ENCODE measurements at regions of chr2 and their contacts with region 1.

Region 1: GRCh38 chr2:65064728-65065552 is 8.7 kb downstream of the CEP68 start:
- DNase-seq: peak; percentile 70
- H3K4me3 Mint-ChIP-seq: no peak overlapping the region
- H3K27ac Mint-ChIP-seq: peak overlapping the region; percentile 47
- H3K4me1 Mint-ChIP-seq: peaks cover 32% of the 10 kb centered on the region
- H3K27me3 Mint-ChIP-seq: no peaks in the 10 kb centered on the region

Region 2: DNA sequence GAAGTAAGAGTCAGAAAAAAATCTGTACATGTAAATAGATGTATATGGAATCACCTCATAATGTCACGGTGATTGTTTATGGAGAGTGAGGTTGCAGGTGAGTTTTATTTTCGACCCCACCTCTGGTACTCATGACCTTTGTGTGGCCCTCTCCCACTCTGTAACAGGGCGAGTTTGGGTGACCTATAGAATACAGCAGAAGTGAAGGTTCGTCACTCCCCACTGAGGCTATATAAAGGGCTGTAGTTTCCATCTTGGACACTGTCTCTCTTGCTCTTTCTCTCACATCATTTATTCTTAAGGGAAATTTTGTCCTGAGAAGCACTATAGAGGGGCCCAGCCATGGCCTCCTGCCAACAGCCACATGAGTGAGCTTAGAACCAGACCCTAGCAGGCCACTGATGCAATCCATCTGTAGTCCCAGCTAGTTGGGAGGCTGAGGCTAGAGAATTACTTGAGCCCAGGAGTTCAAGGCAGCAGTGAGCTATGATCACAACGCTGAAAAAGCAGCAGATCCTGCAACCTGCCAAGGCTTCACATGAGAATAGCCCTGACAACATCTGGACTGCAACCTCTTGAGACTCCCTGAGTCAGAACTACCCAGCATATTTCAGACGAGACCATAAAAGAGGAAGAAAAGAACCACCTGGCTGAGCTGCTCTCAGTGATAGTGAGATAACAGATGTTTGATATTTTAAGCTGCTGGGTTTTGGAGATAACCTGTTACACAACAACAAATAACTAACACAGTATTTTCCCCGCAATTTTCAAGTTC is 150.0 kb before region 1 on chr2:
- CTCF ChIA-PET with region 1: interaction called, 15 read pairs
- intact Hi-C with region 1: loop called (anchors 1 kb)
- DNase-seq: no peak
- H3K4me3 Mint-ChIP-seq: no peak overlapping the region
- H3K27ac Mint-ChIP-seq: no peak overlapping the region
- H3K4me1 Mint-ChIP-seq: peaks cover 14% of the 10 kb centered on the region
- H3K27me3 Mint-ChIP-seq: no peaks in the 10 kb centered on the region

Region 3: DNA sequence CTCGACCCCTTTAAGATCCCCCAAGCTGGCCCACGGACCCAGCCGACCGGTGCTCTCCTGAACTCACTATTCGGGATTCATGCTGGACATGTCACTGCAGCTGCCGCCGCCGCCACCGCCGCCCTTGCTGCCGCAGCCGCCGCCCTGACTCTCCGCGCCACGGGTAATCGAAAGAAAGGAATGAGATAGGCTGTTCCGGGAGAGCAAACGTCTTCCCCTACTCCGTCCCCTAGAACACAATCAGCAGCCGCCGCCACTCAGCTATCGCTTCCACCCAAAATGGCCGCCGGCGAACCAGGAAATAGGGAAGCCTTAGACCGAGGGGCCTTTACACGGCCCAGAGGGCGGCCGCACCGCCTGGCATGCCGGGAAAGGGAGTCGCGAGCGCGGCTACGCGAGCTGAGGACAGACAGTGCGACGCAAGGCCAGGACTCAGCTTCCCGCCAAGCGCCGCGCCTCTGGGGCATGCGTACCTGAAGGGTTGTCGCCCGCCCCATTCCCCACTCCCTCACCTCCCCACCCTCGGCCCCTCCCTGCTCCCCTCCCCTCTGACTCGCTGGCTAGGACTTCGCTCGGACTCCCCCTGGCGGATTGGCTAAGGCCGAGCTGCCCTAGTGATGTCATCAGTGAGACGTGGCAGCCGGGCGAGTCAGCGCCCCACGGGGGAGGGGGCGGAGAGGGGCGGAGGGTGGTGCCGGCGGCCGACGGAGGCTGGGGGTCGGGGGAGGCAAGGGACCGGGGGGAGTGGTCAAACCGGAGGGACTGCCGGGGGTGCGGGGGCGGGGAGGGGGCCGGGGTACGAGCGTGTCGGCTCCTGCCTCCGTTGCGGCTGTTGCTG is 65.1 kb after region 1 on chr2 and contains the start of gene RAB1A:
- CTCF ChIA-PET with region 1: interaction called, 11 read pairs
- intact Hi-C with region 1: loop called (anchors 1 kb)
- DNase-seq: peak; percentile 100
- H3K4me3 Mint-ChIP-seq: peak within 1 kb of the TSS; percentile 95
- H3K27ac Mint-ChIP-seq: peak within 1 kb of the TSS; percentile 94
- H3K4me1 Mint-ChIP-seq: peaks cover 35% of the 10 kb centered on the region
- H3K27me3 Mint-ChIP-seq: no peaks in the 10 kb centered on the region
- total RNA-seq, gene RAB1A: 60.8 to 61.3 TPM

Region 4: GRCh38 chr2:65175917-65176527 is 111.1 kb after region 1 on chr2:
- CTCF ChIA-PET with region 1: interaction called, 63 read pairs
- intact Hi-C with region 1: no loop called
- DNase-seq: no peak
- H3K4me3 Mint-ChIP-seq: no peak overlapping the region
- H3K27ac Mint-ChIP-seq: no peak overlapping the region
- H3K4me1 Mint-ChIP-seq: no peaks in the 10 kb centered on the region
- H3K27me3 Mint-ChIP-seq: no peaks in the 10 kb centered on the region

Region 5: GRCh38 chr2:65227425-65228262 is 162.7 kb after region 1 on chr2 and contains the start of gene ACTR2:
- CTCF ChIA-PET with region 1: interaction called, 10 read pairs
- intact Hi-C with region 1: no loop called
- DNase-seq: peak; percentile 96
- H3K4me3 Mint-ChIP-seq: peak within 1 kb of the TSS; percentile 98
- H3K27ac Mint-ChIP-seq: peak within 1 kb of the TSS; percentile 99
- H3K4me1 Mint-ChIP-seq: peaks cover 41% of the 10 kb centered on the region
- H3K27me3 Mint-ChIP-seq: no peaks in the 10 kb centered on the region
- total RNA-seq, gene ACTR2: 358 to 366 TPM

Region 6: DNA sequence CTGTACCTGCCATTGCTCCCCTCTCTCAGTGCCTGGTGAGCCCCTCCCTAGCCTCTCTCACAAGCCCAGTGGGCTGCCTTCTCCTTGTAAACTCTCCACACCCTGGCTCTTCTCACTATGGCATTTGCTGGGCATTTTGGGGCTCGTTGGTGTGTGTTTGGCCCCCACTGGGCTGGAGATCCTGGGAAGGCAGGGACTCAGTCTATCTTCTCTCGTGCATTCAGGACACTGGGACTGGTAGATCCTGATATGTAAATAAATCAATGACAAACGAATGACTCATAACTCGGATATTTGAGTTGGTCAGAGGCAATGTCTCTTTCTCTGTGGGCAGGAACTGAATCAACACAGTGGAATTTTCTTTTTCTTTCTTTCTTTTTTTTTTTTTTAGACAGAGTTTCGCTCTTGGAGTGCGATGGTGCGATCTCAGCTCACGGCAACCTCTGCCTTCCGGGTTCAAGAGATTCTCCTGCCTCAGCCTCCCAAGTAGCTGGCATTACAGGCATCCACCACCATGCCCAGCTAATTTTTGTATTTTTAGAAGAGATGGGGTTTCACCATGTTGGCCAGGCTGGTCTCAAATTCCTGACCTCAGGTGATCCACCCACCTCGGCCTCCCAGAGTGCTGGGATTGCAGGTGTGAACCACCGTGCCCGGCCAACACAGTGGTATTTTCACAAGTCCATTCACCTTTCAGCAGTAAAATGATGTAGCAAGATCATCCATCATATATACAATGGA is 512.1 kb after region 1 on chr2:
- CTCF ChIA-PET with region 1: interaction called, 7 read pairs
- intact Hi-C with region 1: loop called (anchors 1 kb)
- DNase-seq: no peak
- H3K4me3 Mint-ChIP-seq: no peak overlapping the region
- H3K27ac Mint-ChIP-seq: no peak overlapping the region
- H3K4me1 Mint-ChIP-seq: peaks cover 2% of the 10 kb centered on the region
- H3K27me3 Mint-ChIP-seq: peaks cover 3% of the 10 kb centered on the region

Measured in activated naive CD4-positive, alpha-beta T cell treated with anti-CD3 and anti-CD28 coated beads for 36 hours (primary cell).